Left colon (tissue), 2 donors: ENCODE measurements at regions of chr4 and their contacts with region 1.

Region 1: DNA sequence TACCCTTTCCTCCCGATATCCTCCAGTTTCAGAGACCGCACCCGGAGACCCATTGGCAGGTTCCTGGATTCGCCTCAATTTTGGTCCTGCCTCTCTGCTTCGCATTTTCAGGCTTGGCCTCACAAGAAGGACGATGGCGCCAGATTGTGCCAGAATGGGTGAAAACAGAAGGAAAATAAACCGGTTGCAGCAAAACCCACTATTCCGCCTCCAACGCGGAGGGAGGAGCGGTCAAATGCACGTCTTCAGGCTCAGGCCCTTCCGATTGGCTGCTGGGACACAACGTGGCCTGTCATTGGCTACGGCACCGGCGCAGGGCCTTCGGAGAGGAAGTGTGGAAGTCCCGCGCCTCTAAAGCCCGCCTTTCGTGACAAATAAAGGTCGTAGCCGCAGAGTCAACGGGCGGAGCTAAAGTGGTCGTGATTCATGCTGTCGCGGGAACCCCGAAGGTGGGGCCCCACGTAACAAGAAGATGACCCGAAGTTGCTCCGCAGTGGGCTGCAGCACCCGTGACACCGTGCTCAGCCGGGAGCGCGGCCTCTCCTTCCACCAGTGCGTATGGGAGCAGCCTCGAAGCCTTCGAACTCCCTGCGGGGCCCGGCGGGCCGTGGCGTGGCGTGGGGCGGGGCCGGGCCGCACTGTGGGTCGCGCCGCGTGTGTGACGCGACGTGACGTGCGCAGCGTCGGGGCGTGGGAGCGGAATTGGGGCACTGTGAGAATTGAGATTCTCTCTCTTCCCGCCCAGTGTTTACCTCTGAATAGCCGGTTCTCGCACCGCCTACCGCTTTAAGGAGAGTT is at the start of gene THAP9:
- DNase-seq: peak; percentile 97 to 100
- ATAC-seq: peak; percentile 91
- total RNA-seq, gene THAP9: 2.4 to 2.5 TPM

Region 2: DNA sequence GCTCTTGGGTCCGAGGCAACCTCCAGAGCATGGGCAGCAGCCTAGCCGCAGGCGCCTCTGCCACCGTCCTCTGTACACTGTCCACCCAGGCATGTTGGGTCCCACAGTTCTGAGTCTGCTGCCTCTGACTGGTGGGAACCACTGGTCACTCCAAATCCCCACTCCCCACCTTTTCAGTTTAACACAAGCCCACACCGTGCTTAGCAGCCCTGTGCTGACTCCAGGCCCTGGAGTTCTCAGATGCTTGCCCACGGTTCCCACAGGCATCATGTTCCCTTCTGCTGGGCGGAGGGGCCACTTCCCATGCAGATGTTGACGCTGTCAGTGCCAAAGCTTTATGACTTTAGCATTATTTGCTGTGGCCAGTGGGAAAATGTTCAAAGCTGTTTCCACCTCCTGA is 206.5 kb before region 1 on chr4:
- intact Hi-C with region 1: no loop called
- DNase-seq: no peak
- ATAC-seq: no peak

Region 3: GRCh38 chr4:83012687-83013419 is 112.3 kb after region 1 on chr4:
- intact Hi-C with region 1: loop called in 1 of 2 experiments (anchors 5 kb)
- DNase-seq: peak; percentile 96 to 97
- ATAC-seq: peak; percentile 89